Activated CD4-positive, alpha-beta T cell treated with anti-CD3 and anti-CD28 coated beads for 36 hours (primary cell): ENCODE measurements at regions of chr4 and their contacts with region 1.

Region 1: DNA sequence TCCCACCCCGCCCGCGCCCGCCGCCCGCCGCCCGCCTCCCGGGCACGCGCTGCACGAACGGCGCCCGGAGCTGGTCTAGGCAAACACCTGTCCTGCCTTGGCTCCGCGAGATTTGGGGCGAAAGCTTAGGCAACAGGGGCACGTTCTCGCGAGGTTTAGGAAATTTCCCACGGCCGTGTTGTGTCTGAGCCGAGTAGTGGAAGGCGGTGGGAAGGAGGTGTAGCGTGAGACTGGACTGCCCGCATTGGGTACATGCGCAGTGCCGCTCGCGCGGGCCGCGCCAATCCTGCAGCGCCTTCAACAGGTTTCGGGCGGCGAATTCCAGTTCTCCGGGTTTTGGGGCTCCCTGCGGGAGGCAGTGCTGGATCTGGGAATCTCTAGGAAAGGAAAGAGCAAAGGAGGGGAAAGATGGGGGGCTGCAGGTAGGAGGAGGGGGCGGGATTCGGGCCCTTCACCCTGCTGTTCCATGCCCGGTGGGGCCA is 1.3 kb upstream of the RBPJ start:
- DNase-seq: peak; percentile 99
- ATAC-seq: peak; percentile 72
- H3K4me3 Mint-ChIP-seq: peak overlapping the region; percentile 99
- H3K27ac Mint-ChIP-seq: peak overlapping the region; percentile 97
- H3K4me1 Mint-ChIP-seq: peaks cover 37% of the 10 kb centered on the region
- H3K27me3 Mint-ChIP-seq: no peaks in the 10 kb centered on the region

Region 2: GRCh38 chr4:25862411-25863346 is 456.8 kb before region 1 on chr4 and contains the start of gene SEL1L3:
- CTCF ChIA-PET with region 1: no interaction called
- POLR2A ChIA-PET with region 1: no interaction called
- intact Hi-C with region 1: loop called in 1 of 2 experiments (anchors 1 kb)
- DNase-seq: peak; percentile 79
- ATAC-seq: peak; percentile 33
- H3K4me3 Mint-ChIP-seq: peak within 1 kb of the TSS; percentile 94
- H3K27ac Mint-ChIP-seq: peak within 1 kb of the TSS; percentile 96
- H3K4me1 Mint-ChIP-seq: peaks cover 40% of the 10 kb centered on the region
- H3K27me3 Mint-ChIP-seq: no peaks in the 10 kb centered on the region
- total RNA-seq, gene SEL1L3: 31.9 to 34.8 TPM

Region 3: GRCh38 chr4:25938787-25939186 is 380.7 kb before region 1 on chr4:
- CTCF ChIA-PET with region 1: no interaction called
- POLR2A ChIA-PET with region 1: interaction called, 4 read pairs
- intact Hi-C with region 1: loop called in 1 of 2 experiments (anchors 1 kb)
- DNase-seq: peak; percentile 76
- ATAC-seq: peak; percentile 97
- H3K4me3 Mint-ChIP-seq: peak overlapping the region; percentile 5
- H3K27ac Mint-ChIP-seq: peak overlapping the region; percentile 72
- H3K4me1 Mint-ChIP-seq: peaks cover 22% of the 10 kb centered on the region
- H3K27me3 Mint-ChIP-seq: peaks cover 18% of the 10 kb centered on the region

Region 4: GRCh38 chr4:26197018-26197779 is 122.3 kb before region 1 on chr4:
- CTCF ChIA-PET with region 1: interaction called, 3 read pairs
- POLR2A ChIA-PET with region 1: interaction called, 9 read pairs
- intact Hi-C with region 1: loop called (anchors 1 kb)
- DNase-seq: peak; percentile 80
- ATAC-seq: peak; percentile 75
- H3K4me3 Mint-ChIP-seq: peak overlapping the region; percentile 52
- H3K27ac Mint-ChIP-seq: peak overlapping the region; percentile 91
- H3K4me1 Mint-ChIP-seq: peaks cover 68% of the 10 kb centered on the region
- H3K27me3 Mint-ChIP-seq: peaks cover 2% of the 10 kb centered on the region

Region 5: GRCh38 chr4:26372525-26373172 is 53.1 kb after region 1 on chr4:
- CTCF ChIA-PET with region 1: no interaction called
- POLR2A ChIA-PET with region 1: no interaction called
- intact Hi-C with region 1: loop called in 1 of 2 experiments (anchors 5 kb)
- DNase-seq: peak; percentile 54
- ATAC-seq: peak; percentile 84
- H3K4me3 Mint-ChIP-seq: no peak overlapping the region
- H3K27ac Mint-ChIP-seq: no peak overlapping the region
- H3K4me1 Mint-ChIP-seq: peaks cover 63% of the 10 kb centered on the region
- H3K27me3 Mint-ChIP-seq: no peaks in the 10 kb centered on the region

Region 6: DNA sequence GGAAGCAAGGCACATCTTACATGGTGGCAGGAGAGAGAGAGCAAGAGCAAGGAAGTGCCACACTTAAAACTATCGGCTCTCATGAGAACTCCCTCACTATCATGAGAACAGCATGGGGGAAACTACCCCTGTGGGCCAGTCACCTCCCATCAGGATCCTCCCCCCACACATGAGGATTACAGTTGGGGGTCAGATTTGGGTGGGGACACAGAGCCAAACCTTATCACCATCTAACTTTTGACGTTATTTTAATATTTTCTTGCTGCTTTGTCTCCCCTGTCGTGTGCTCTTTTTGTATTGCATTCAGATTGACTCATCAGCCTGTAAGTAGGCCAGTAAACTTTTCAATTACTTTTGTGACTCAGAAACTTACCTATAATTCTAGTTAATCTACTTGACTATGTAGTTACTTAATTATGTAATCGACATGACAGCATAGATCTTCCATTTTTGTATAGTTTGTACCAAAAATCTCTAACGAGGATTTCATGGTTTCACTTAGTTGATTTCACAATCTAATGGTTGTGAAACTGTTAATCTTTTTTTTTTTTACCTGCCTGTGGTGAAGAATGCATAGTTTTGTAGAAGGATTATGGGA is 559.4 kb after region 1 on chr4:
- CTCF ChIA-PET with region 1: no interaction called
- POLR2A ChIA-PET with region 1: no interaction called
- intact Hi-C with region 1: loop called in 1 of 2 experiments (anchors 5 kb)
- DNase-seq: peak; percentile 30
- ATAC-seq: peak; percentile 82
- H3K4me3 Mint-ChIP-seq: peak overlapping the region; percentile 13
- H3K27ac Mint-ChIP-seq: peak overlapping the region; percentile 85
- H3K4me1 Mint-ChIP-seq: peaks cover 75% of the 10 kb centered on the region
- H3K27me3 Mint-ChIP-seq: no peaks in the 10 kb centered on the region